ENCODE measurements at regions of chr21 and their contacts with region 1.

Region 1: DNA sequence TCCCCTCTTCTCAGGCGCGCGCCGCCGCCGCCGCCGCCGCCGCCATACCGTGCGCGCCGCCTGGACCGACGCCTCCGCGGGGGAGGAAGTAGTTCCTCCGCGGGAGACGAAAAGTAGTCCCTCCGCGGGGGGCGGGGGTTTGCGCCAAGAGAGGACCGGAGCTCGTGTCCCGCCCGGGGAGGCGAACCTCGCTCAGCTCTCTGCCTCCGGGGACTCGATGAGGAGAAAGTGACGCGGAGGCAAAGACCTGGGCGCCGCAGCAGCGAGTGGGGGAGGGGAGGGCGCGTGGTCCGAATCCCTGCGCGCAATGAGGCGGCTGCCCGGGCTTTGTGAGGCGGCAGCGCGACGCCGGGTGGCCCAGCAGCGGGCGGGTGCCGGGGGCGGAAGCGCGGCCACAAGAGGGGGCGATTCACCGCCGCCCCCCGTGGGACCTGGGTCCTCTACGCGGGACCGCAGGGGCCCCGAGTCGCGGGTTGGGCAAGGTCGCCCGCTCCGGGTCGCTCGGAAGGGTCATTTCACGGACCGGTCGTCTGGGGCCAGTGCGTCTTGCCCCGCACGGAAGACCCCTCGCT is at the start of gene BRWD1:
- DNase-seq: no peak
- H3K4me3 ChIP-seq: peak within 1 kb of the TSS; percentile 84 to 94
- H3K27ac ChIP-seq: peak within 1 kb of the TSS; percentile 97
- H3K4me1 ChIP-seq: peaks cover 24% of the 10 kb centered on the region
- H3K27me3 ChIP-seq: no peaks in the 10 kb centered on the region
- CTCF ChIP-seq: peak in 1 of 3 experiments; percentile 25
- POLR2A ChIP-seq: peak in 1 of 2 donors; percentile 58
- total RNA-seq, gene BRWD1: 62.1 TPM

Region 2: DNA sequence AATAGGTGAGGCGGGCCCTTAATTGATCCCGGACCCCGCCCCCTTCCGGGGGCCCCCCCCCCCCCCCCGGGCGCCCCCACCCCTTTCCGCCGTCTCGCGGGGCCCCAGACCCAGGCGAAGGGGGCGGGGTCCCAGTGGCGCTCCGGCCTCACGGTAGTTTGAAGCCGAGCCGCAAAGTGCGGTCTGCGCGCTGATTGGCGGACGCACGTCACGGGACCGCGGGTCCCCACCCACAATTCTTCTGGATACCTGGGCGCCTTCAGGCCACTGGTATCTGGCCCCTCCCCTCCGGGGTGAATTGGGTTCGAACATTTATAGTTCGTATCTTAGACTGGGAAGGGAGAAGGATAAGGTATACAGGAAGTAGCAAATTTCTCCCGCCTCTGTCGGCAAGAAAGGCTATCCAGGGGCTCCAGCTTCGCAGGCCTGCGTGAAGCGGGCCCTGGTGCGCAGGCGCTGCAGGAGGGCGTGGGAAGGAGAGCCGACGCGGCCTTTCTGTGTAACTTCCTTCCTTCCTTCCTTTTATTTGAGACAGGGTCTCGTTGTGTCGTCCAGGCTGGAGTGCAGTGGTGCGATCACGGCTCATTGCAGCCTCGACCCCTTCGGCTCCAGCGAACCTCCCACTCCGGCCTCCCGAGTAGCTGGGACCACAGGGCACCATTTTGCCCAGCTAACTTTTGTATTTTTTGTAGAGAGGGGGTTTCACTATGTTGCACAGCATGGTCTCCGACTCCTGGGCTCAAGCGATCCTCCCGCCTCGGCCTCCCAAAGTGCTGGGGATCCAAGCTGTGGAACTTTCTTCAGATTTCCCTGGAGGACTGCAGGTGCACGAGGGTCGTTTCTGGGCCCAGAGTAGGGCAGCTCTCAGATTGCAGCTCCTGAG is 35.8 kb after region 1 on chr21:
- intact Hi-C with region 1: loop called (anchors 2 kb)
- DNase-seq: peak in 1 of 2 donors; percentile 97
- H3K4me3 ChIP-seq: peak overlapping the region; percentile 81 to 82
- H3K27ac ChIP-seq: peak overlapping the region; percentile 84
- H3K4me1 ChIP-seq: peaks cover 36% of the 10 kb centered on the region
- H3K27me3 ChIP-seq: no peaks in the 10 kb centered on the region
- CTCF ChIP-seq: no peak
- POLR2A ChIP-seq: no peak

Region 3: DNA sequence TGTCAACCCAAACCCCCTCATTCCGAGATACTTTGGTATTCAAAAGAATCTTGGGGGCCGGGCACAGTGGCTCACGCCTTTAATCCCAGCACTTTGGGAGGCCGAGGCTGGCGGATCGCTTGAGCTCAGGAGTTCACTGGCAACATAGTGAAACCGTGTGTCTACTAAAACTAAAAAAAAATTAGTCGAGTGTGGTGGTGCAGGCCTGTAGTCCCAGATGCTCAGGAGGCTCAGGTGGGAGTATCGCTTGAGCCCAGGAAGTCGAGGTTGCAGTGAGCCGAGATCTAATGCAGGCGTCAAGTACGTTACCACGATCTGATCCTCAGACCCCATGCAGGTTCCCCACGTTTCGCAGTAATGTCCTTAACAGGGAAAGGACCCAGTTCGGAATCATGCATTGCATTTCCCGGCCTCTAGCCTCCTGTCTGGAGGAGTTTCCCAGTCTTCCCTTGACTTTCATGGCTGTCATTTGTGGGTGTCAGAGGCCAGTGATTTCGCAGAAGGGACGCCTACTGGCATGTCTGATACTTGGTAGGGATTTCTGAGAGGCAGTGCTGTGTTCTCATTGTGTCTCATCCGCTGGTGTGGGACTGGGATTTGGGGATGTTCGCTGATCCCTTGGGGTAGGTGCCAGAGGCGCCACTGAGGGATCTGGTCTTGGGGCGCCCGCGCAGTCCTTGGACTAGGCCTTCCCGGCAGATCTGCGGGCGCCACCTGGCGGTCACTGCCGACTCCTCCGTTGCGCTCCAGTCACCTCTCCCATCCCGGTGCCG is 74.6 kb after region 1 on chr21:
- intact Hi-C with region 1: loop called (anchors 5 kb)
- DNase-seq: peak in 1 of 2 donors; percentile 88
- H3K4me3 ChIP-seq: peak overlapping the region; percentile 47 to 53
- H3K27ac ChIP-seq: peak overlapping the region; percentile 65
- H3K4me1 ChIP-seq: peaks cover 35% of the 10 kb centered on the region
- H3K27me3 ChIP-seq: no peaks in the 10 kb centered on the region
- CTCF ChIP-seq: peak; percentile 80 to 94 (median 82)
- POLR2A ChIP-seq: no peak

Measured in vagina (tissue), 2 donors.